BJ (cell line): ENCODE measurements at regions of chr22 and their contacts with region 1.

Region 1: DNA sequence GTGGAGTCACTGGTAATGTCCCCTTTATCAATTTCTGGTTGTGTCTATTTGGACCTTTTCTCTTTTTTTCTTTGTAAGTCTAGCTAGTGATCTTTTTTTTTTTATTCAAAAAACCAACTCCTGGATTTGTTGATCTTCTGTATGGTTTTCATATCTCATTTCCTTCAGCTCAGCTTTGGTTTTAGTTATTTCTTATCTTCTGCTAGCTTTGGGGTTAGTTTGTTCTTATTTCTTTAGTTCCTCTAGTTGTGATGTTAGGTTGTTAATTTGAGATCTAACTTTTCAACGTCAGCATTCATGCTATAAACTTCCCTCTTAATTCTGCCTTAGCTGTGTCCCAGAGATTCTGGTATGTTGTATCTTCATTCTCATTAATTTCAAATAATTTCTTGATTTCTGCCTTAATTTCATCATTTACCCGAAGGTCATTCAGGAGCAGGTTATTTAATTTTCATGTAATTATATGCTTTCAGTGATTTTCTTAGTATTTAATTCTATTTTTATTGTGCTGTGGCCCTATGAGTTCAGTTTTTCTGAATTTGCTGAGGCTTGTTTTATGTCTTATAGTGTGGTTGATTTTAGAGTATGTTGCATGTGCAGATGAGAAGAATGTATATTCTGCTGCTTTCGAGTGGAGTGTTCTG is 29.0 kb downstream of the PI4KA start:
- DNase-seq: no peak
- H3K4me3 ChIP-seq: no peak overlapping the region
- H3K27me3 ChIP-seq: no peaks in the 10 kb centered on the region
- CTCF ChIP-seq: no peak

Region 2: GRCh38 chr22:20847318-20847822 is 17.8 kb after region 1 on chr22:
- CTCF ChIA-PET with region 1: interaction called, 3 read pairs
- POLR2A ChIA-PET with region 1: interaction called, 11 read pairs
- DNase-seq: no peak
- H3K4me3 ChIP-seq: no peak overlapping the region
- H3K27me3 ChIP-seq: no peaks in the 10 kb centered on the region
- CTCF ChIP-seq: no peak

Region 3: GRCh38 chr22:20998411-20999336 is 169.1 kb after region 1 on chr22:
- CTCF ChIA-PET with region 1: no interaction called
- POLR2A ChIA-PET with region 1: no interaction called
- DNase-seq: no peak
- H3K4me3 ChIP-seq: no peak overlapping the region
- H3K27me3 ChIP-seq: no peaks in the 10 kb centered on the region
- CTCF ChIP-seq: no peak